ENCODE measurements at regions of chr17 and their contacts with region 1.

Region 1: GRCh38 chr17:19648475-19649406 is at the start of gene ALDH3A2:
- DNase-seq: peak; percentile 100
- ATAC-seq: peak; percentile 100
- total RNA-seq, gene ALDH3A2: 64.4 TPM

Region 2: GRCh38 chr17:19377602-19378392 is 270.9 kb before region 1 on chr17:
- intact Hi-C with region 1: loop called (anchors 5 kb)
- DNase-seq: peak; percentile 100
- ATAC-seq: peak; percentile 98

Region 3: GRCh38 chr17:19513897-19514488 is 134.7 kb before region 1 on chr17:
- intact Hi-C with region 1: loop called (anchors 5 kb)
- DNase-seq: peak; percentile 74
- ATAC-seq: peak; percentile 68

Region 4: GRCh38 chr17:19753049-19753444 is 104.3 kb after region 1 on chr17:
- intact Hi-C with region 1: loop called (anchors 5 kb)
- DNase-seq: peak; percentile 80
- ATAC-seq: peak; percentile 87

Region 5: GRCh38 chr17:19915245-19915978 is 266.7 kb after region 1 on chr17:
- intact Hi-C with region 1: no loop called
- DNase-seq: no peak
- ATAC-seq: no peak